K562 (cell line): ENCODE measurements at regions of chr12 and their contacts with region 1.

Region 1: DNA sequence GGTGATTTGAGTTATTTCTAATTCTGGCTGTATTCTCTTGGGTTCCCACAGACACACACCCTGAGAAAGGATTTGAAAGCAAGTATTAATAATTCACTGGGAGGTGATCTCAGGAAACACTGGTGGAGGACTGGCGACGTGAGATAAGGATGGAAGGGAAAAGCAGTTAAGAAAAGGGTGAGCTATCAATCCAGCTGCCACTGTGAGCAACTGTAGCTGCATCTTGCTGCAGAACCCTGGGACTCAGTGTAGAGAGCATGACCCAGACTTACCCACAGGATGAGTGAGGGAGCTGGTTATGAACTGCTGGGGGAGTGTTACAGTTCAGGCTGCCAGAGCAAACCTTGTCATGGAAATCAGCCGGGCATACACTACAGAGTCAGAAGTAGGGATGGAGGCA is 71.9 kb downstream of the RESF1 start:
- DNase-seq: peak; percentile 80 to 96 (median 83)
- ATAC-seq: peak; percentile 98
- H3K4me3 ChIP-seq: no peak overlapping the region
- H3K27ac ChIP-seq: peak overlapping the region; percentile 68
- H3K4me1 ChIP-seq: peaks cover 25 to 41% of the 10 kb centered on the region in 2 experiments
- H3K27me3 ChIP-seq: no peaks in the 10 kb centered on the region
- CTCF ChIP-seq: peak in 1 of 3 experiments; percentile 11; a peak in 1 of 6 replicates
- EP300 ChIP-seq: peak; percentile 100
- POLR2A ChIP-seq: no peak
- RAD21 ChIP-seq: peak; percentile 38 to 58; a peak in 3 of 4 replicates

Region 2: DNA sequence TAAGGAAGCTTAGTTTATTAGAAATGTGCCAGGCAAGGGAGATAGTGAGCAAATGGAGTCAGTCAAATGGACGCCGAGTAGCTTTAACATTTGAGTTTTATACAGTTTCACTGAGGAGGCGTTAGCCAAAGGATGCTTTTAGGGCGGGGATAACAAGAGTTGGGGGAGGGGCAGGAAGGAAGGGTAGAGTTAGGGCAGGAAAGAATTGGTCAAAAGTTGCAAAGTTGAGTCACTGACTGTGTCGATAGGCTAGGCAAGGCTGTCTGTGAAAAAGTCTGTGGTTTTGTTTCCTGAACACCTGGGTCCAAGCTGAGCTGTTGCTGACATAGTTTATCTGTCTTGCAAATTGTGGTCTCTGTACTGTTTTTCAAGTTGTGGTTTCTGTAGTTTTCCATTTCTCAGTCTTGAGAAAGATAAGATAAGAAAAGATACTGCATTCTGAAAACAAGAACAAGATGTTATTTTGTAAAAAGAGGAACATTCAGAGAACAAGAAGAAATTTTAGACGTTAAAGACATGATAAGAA is 134.5 kb before region 1 on chr12:
- CTCF ChIA-PET with region 1: no interaction called
- POLR2A ChIA-PET with region 1: no interaction called
- in situ Hi-C with region 1: no loop called
- intact Hi-C with region 1: no loop called
- DNase-seq: peak; percentile 42 to 84 (median 60)
- ATAC-seq: peak; percentile 84
- H3K4me3 ChIP-seq: no peak overlapping the region
- H3K27ac ChIP-seq: peak overlapping the region; percentile 27; the same call in 2 of the 3 replicates
- H3K4me1 ChIP-seq: peaks cover 19 to 21% of the 10 kb centered on the region in 2 experiments
- H3K27me3 ChIP-seq: no peaks in the 10 kb centered on the region
- CTCF ChIP-seq: no peak
- EP300 ChIP-seq: peak; percentile 83
- POLR2A ChIP-seq: no peak
- RAD21 ChIP-seq: peak; percentile 24 to 45; a peak in 3 of 4 replicates

Region 3: DNA sequence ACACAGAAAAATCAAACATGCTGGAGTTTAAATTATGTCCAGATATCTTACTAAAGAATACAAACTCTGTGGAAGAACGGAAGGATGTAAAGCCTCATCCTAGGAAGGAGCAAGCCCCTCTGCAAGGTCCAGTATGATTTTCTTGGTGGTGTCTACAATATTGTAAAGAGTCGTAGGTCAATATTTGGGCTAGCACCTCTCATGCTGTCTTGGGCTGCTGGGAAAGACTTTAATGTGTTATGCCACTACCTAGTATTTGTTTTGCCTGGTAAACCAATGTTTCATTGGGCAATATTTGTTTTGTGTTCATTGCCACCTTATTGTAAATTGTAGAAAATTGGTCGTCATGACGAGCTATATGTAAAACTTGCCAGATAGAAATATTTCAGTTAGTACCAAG is 45.3 kb before region 1 on chr12:
- CTCF ChIA-PET with region 1: no interaction called
- POLR2A ChIA-PET with region 1: no interaction called
- in situ Hi-C with region 1: no loop called
- intact Hi-C with region 1: no loop called
- DNase-seq: no peak
- ATAC-seq: no peak
- H3K4me3 ChIP-seq: no peak overlapping the region
- H3K27ac ChIP-seq: no peak overlapping the region
- H3K4me1 ChIP-seq: no peaks in the 10 kb centered on the region
- H3K27me3 ChIP-seq: no peaks in the 10 kb centered on the region
- CTCF ChIP-seq: no peak
- EP300 ChIP-seq: no peak
- POLR2A ChIP-seq: no peak
- RAD21 ChIP-seq: no peak

Region 4: DNA sequence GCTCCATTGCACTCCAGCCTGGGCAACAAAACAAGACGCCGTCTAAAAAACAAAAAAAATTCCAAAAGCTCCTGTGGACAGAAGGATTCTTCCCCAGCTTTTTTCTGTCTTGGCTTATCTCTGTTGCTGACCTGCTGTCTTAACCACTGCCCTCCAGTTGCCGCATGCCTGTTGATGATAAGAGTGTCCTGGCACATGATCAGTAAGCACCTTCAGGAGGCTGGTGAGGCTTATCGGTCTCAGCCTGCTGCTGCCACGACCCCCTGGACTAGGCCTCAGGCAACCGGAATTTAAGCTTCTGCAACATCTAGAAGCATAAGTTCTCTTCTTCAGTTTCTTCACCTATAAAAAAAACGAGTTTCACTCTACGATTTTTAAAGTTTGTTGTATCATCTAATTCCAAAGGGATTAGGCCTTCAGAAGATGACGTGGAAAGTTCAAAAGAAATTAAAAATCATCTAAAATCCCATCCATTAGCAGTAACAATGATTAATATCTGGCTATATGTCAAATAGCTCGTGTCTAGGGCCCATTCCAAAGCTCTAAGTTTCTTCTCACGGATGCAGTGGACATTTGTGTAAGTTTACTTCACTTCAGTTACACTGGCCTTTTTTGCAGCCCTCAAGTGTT is 25.5 kb before region 1 on chr12:
- CTCF ChIA-PET with region 1: no interaction called
- POLR2A ChIA-PET with region 1: interaction called, 4 read pairs
- in situ Hi-C with region 1: no loop called
- intact Hi-C with region 1: loop called (anchors 1 kb)
- DNase-seq: peak; percentile 96 to 98 (median 97)
- ATAC-seq: peak; percentile 90
- H3K4me3 ChIP-seq: no peak overlapping the region
- H3K27ac ChIP-seq: peak overlapping the region; percentile 41
- H3K4me1 ChIP-seq: peaks cover 21 to 24% of the 10 kb centered on the region in 2 experiments; a peak in 4 of 5 replicates
- H3K27me3 ChIP-seq: no peaks in the 10 kb centered on the region
- CTCF ChIP-seq: peak in 1 of 3 experiments; percentile 11; a peak in 1 of 6 replicates
- EP300 ChIP-seq: peak; percentile 99
- POLR2A ChIP-seq: no peak
- RAD21 ChIP-seq: peak; percentile 41 to 61; a peak in 3 of 4 replicates

Region 5: GRCh38 chr12:32069731-32070130 is 38.6 kb after region 1 on chr12:
- CTCF ChIA-PET with region 1: no interaction called
- POLR2A ChIA-PET with region 1: no interaction called
- in situ Hi-C with region 1: no loop called
- intact Hi-C with region 1: no loop called
- DNase-seq: no peak
- ATAC-seq: no peak
- H3K4me3 ChIP-seq: no peak overlapping the region
- H3K27ac ChIP-seq: no peak overlapping the region
- H3K4me1 ChIP-seq: no peaks in the 10 kb centered on the region
- H3K27me3 ChIP-seq: no peaks in the 10 kb centered on the region
- CTCF ChIP-seq: no peak
- EP300 ChIP-seq: no peak
- POLR2A ChIP-seq: no peak
- RAD21 ChIP-seq: no peak